Psoas muscle (tissue), 8 donors: ENCODE measurements at regions of chr6 and their contacts with region 1.

Region 1: DNA sequence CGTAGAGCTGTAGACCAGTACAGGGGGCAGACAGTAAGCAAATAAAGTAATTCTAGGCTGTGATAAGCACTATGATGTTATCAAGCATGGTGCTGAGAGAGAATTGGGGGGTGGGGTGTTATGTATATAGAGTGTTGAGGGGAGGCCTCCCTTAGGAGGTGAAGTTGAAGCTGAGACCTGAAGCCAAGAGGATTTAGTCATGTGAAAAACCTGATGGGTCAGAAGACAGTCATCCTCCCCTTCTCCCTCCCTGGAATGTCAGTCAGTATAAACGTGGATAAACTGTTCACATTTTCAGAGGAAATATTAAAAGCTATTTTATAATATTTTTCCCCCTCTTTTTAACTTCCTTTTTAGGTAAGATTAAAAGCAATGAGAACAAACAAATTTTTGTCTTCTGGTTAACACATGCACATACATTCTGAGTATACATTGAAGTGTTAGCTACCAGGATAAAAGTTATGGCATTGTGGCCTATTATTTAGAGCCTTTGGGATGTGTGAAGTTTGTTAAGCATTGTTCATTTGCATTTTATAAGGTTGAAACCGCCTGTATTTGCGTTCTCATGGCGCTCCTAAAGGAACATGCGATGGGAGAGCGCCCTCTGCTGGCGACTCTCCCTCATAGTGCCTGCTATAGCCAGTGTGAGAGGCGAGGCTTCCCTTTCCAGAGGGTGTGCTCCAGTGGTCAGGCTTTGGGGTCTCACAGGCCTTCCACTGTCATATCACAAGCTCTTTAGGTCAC is 35.4 kb upstream of the MAPK13 start:
- DNase-seq: peak; percentile 79 to 90
- ATAC-seq: peak; percentile 94 to 99 (median 96)
- H3K4me3 ChIP-seq: no peak overlapping the region
- H3K27ac ChIP-seq: peak overlapping the region; percentile 41
- H3K4me1 ChIP-seq: peaks cover 4% of the 10 kb centered on the region
- H3K27me3 ChIP-seq: no peaks in the 10 kb centered on the region
- CTCF ChIP-seq: peak; percentile 97

Region 2: GRCh38 chr6:35776364-35777215 is 318.3 kb before region 1 on chr6 and contains the start of gene CLPSL2:
- intact Hi-C with region 1: no loop called
- DNase-seq: no peak
- ATAC-seq: peak in 2 of 4 donors; percentile 22 to 23
- H3K4me3 ChIP-seq: peak within 1 kb of the TSS; percentile 59
- H3K27ac ChIP-seq: no peak within 1 kb of the TSS
- H3K4me1 ChIP-seq: no peaks in the 10 kb centered on the region
- H3K27me3 ChIP-seq: peaks cover 0 to 54% (median 16%) of the 10 kb centered on the region in 3 donors
- CTCF ChIP-seq: no peak
- total RNA-seq, gene CLPSL2: not detected

Region 3: DNA sequence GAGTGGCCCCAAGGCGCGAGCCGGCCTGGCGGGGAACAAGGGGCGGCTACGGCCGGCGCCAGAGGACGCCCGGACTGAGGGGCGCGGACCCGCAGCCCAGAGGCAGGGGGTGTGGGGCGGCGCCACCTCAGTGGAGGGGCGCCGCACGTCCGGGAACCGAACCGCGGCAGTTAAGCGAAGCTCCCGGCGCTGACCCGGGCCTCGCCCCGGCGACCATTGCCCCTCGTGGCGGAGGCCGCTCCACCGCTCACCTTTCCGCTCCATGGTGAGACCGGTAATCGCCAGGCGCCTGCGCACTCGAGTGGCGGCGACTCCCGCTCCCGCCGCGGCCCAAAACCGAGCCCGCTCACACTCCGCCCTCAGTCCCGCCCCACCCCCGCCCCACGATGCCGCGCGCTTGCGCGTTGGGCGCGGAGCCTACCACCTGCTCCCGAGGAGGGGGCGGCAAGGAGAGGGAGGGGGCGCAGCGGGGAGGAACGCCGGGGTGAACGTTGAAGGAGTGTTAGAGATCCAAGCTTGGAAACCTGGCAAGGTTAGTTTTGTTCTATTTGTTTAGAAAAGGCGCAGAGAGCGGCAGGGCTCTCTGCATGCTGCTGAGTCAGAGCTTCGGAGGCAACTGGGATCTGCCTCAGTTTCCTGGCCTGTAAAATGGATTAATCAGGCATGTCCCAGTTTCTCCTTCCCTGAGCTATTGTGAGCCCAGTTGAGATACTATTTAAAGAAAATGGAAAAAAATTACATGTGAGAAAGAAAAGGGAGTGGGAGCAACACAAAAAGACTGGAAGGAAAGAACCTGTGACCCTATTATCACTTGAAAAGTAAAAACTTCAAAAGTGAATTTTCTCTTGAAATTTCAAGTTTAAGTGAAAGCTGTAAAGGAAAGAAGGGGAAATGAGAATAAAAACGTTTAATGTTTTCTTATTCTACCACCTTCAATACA is 173.9 kb before region 1 on chr6 and contains the start of gene SRPK1:
- intact Hi-C with region 1: loop called in 1 of 2 experiments (anchors 10 kb)
- DNase-seq: peak; percentile 89 to 93
- ATAC-seq: peak; percentile 93 to 97 (median 96)
- H3K4me3 ChIP-seq: peak within 1 kb of the TSS; percentile 93
- H3K27ac ChIP-seq: peak within 1 kb of the TSS; percentile 88
- H3K4me1 ChIP-seq: peaks cover 18% of the 10 kb centered on the region
- H3K27me3 ChIP-seq: no peaks in the 10 kb centered on the region
- CTCF ChIP-seq: no peak
- total RNA-seq, gene SRPK1: 24.1 to 42.4 (median 31.3) TPM

Region 4: GRCh38 chr6:36027501-36028087 is 67.3 kb before region 1 on chr6 and contains the start of gene MAPK14:
- intact Hi-C with region 1: loop called (anchors 1 to 2 kb)
- DNase-seq: peak; percentile 99
- ATAC-seq: peak; percentile 95 to 96 (median 96)
- H3K4me3 ChIP-seq: peak within 1 kb of the TSS; percentile 90
- H3K27ac ChIP-seq: peak within 1 kb of the TSS; percentile 93
- H3K4me1 ChIP-seq: peaks cover 16% of the 10 kb centered on the region
- H3K27me3 ChIP-seq: no peaks in the 10 kb centered on the region
- CTCF ChIP-seq: peak; percentile 89
- total RNA-seq, gene MAPK14: 23.9 to 32.8 (median 31.4) TPM